ENCODE measurements at regions of chr16 and their contacts with region 1.

Region 1: DNA sequence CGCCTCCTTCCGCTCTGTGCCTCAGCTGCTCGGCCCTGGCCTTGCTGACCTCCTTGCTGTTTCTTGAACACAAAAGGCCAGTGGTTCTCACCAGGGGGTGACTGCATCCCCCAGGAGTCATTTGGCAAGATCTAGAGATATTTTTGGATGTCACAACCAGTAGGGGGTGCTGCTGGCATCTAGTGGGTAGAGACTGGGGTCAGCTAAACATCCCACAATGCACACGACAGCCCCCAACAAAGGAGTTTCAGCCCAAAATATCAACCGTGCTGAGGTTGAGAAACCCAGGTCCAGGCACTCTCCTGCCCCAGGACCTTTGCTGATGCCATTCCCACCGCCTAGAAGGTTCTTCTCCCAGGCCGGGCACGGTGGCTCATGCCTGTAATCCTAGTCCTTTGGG is 39.7 kb downstream of the ABCC6 start:
- H3K4me3 ChIP-seq: no peak overlapping the region
- H3K27ac ChIP-seq: no peak overlapping the region
- H3K4me1 ChIP-seq: no peaks in the 10 kb centered on the region
- CTCF ChIP-seq: no peak

Region 2: DNA sequence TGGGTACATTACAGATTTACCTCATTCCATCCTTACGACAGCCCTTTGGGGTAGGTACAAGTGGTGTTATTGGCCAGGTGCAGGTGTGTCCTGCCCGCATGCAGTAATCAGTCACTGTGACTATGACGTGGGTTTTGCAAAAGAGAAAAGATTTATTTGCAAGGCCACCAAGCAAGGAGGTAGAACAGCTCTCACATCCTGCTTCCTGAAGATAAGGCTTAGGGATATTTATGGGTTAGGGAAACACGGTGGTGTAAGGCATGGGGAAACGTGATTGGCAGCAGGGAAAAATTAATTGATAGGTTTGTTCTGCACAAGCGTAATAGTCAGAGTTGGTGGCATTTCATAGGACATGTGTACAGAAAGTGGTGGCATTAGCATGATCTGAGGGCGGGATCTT is 1768.3 kb before region 1 on chr16:
- CTCF ChIA-PET with region 1: interaction called, 10 read pairs
- POLR2A ChIA-PET with region 1: no interaction called
- H3K4me3 ChIP-seq: no peak overlapping the region
- H3K27ac ChIP-seq: no peak overlapping the region
- H3K4me1 ChIP-seq: no peaks in the 10 kb centered on the region
- CTCF ChIP-seq: no peak

Region 3: DNA sequence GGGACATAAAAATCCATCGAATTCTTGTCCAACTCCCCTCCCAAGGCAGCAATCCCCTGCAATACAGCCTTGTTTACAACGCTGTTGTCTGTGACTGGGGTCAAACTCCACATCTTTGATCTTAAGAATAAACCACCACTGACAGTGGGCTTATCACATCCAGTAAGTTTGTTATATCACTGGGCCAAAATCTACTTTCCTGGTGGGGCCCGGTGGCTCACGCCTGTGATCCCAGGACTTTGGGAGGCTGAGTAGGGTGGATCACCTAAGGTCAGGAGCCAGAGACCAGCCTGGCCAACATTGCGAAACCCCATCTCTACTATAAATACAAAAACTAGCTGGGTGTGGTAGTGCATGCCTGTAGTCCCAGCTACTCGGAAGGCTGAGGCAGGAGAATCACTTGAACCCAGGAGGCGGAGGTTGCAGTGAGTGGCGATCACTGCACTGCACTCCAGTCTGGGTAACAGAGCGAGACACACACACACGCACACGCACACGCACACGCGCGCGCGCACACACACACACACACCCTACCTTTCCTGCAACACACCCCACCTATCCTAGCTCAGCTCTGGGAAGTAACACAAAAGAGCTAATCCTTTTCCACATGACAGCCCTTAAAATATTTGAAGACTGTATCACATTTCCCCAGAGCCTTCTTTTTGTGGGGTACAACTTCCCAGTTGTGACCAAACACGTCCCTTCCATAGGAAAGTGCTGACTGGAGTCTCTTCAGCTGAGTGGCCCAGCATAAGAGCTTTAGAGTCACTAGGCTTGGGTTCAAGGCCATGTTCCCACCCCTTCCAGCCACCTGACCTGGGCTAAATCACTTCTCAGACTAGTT is 255.1 kb before region 1 on chr16:
- CTCF ChIA-PET with region 1: no interaction called
- POLR2A ChIA-PET with region 1: no interaction called
- H3K4me3 ChIP-seq: no peak overlapping the region
- H3K27ac ChIP-seq: no peak overlapping the region
- H3K4me1 ChIP-seq: no peaks in the 10 kb centered on the region
- CTCF ChIP-seq: no peak

Region 4: DNA sequence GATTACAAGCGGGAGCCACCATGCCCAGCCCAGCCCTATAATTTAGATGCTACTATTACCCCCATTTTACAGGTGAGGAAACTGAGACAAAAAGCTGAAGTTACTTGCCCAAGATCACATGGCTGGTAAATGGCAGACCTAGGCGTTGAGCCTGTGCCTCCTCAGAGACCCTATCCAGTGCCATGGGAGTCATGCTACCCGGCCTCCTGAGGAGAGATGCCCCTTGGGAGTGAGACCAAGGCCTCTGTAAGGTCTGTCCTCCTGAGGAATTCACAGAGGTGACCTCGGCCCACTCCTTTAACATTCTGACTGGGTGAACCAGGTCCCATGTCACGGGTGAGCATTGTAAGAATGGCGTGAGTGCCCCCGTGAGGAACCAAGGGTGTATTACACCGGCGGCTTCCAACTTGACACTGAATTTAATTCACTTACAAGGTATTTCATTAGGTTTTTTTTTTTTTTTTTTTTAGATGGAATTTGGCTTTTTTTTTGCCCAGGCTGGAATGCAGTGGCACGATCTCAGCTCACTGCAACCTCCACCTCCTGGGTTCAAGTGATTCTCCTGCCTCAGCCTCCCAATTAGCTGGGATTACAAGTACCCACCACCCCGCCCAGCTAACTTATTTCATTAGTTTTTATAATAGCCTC is 56.0 kb before region 1 on chr16:
- CTCF ChIA-PET with region 1: no interaction called
- POLR2A ChIA-PET with region 1: no interaction called
- H3K4me3 ChIP-seq: no peak overlapping the region
- H3K27ac ChIP-seq: no peak overlapping the region
- H3K4me1 ChIP-seq: no peaks in the 10 kb centered on the region
- CTCF ChIP-seq: peak; percentile 66